Endothelial cell of umbilical vein (primary cell): ENCODE measurements at regions of chr16 and their contacts with region 1.

Region 1: GRCh38 chr16:49855280-49855821 is 561 bp downstream of the ZNF423 start:
- DNase-seq: peak; percentile 73
- H3K4me3 ChIP-seq: peak overlapping the region; percentile 48 to 92 (median 49)
- H3K27ac ChIP-seq: peak overlapping the region; percentile 19
- H3K4me1 ChIP-seq: peaks cover 31% of the 10 kb centered on the region
- H3K27me3 ChIP-seq: peaks cover 34 to 54% of the 10 kb centered on the region in 2 experiments
- CTCF ChIP-seq: no peak
- POLR2A ChIP-seq: peak; percentile 73

Region 2: GRCh38 chr16:49441366-49441780 is 414.0 kb before region 1 on chr16:
- CTCF ChIA-PET with region 1: no interaction called
- POLR2A ChIA-PET with region 1: no interaction called
- dilution Hi-C with region 1: no loop called
- intact Hi-C with region 1: loop called (anchors 5 kb)
- DNase-seq: no peak
- H3K4me3 ChIP-seq: no peak overlapping the region
- H3K27ac ChIP-seq: no peak overlapping the region
- H3K4me1 ChIP-seq: no peaks in the 10 kb centered on the region
- H3K27me3 ChIP-seq: no peaks in the 10 kb centered on the region
- CTCF ChIP-seq: no peak
- POLR2A ChIP-seq: no peak

Region 3: DNA sequence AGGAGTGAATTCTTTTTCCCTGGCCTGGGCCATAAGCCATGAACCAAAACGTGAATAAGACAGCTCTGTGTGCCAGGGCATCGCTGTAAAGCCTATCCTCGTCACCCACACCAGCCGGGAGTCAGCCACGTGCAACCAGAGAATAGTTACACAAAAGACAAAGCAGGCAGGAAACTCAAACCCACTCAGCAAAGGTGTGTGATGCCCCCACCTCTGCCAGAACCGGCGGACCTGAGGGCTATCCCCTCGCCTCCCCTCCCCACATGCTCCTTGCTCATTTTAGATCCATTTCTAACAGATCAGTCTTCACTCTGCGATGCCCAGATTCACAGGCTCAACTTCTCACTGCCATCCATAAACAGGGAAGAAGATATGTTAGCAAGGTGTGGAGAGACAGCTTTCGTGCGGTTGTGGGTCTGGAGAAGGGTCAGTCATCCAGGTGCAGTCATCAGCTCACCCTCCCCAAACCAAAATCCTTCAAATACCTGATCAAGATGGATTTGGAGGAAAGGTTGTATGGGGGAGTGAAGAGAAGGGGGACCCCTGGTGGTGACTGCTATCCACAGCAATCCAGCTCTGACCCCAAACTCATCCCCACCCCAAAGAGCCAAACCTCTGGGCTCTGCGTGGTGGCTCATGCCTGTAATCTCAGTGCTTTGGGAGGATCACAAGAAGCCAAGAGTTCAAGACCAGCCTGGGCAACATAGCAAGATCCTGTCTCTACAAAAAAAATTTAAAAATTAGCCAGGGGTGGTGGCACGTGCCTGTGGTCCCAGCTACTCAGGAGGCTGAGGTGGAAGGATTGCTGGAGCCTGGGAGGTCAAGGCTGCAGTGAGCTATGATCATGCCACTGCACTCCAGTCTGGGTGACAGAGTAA is 262.6 kb before region 1 on chr16:
- CTCF ChIA-PET with region 1: interaction called, 12 read pairs
- POLR2A ChIA-PET with region 1: no interaction called
- dilution Hi-C with region 1: no loop called
- intact Hi-C with region 1: loop called (anchors 2 kb)
- DNase-seq: peak; percentile 33
- H3K4me3 ChIP-seq: no peak overlapping the region
- H3K27ac ChIP-seq: no peak overlapping the region
- H3K4me1 ChIP-seq: peaks cover 4% of the 10 kb centered on the region
- H3K27me3 ChIP-seq: no peaks in the 10 kb centered on the region
- CTCF ChIP-seq: peak; percentile 64 to 88
- POLR2A ChIP-seq: no peak

Region 4: DNA sequence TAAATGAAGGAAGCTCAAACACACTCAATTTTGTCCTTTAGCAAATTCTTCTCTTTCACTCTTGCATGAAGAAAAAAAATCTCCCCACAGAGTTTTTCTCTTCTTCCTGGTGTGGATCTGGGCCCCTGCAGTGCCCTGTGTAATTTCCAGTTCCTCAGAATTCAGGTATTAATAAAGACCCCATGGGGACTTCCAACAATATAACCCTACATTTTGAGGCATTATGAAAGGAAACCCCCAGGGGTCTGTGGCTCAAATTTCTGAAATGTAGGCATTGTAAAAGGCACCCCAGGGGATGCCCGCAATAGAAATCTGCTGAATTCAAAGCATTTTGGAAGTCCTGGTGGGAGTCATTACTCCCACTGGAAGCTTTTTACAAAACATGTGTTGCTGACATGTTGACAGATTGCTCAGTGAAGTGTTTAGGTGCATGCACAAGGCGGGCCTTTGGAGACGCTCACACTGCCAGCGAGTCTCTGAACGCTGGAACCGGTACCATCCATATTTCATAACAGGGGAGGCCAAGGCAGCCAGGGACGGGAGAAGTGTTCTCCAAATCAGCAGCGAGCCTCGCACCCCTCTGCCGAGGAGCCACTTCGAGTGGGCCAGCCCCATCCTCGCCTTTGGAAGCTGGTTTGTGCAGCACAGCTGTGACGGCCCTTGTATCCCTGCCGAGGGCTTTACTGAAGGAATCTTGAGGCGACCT is 153.4 kb before region 1 on chr16:
- CTCF ChIA-PET with region 1: interaction called, 3 read pairs
- POLR2A ChIA-PET with region 1: no interaction called
- dilution Hi-C with region 1: no loop called
- intact Hi-C with region 1: loop called (anchors 5 kb)
- DNase-seq: no peak
- H3K4me3 ChIP-seq: no peak overlapping the region
- H3K27ac ChIP-seq: no peak overlapping the region
- H3K4me1 ChIP-seq: no peaks in the 10 kb centered on the region
- H3K27me3 ChIP-seq: peaks cover 11 to 15% of the 10 kb centered on the region in 2 experiments
- CTCF ChIP-seq: no peak
- POLR2A ChIP-seq: no peak

Region 5: GRCh38 chr16:49821156-49821555 is 34.2 kb before region 1 on chr16:
- CTCF ChIA-PET with region 1: interaction called, 20 read pairs
- POLR2A ChIA-PET with region 1: no interaction called
- dilution Hi-C with region 1: no loop called
- intact Hi-C with region 1: loop called (anchors 1 kb)
- DNase-seq: no peak
- H3K4me3 ChIP-seq: no peak overlapping the region
- H3K27ac ChIP-seq: no peak overlapping the region
- H3K4me1 ChIP-seq: peaks cover 23% of the 10 kb centered on the region
- H3K27me3 ChIP-seq: no peaks in the 10 kb centered on the region
- CTCF ChIP-seq: no peak
- POLR2A ChIP-seq: no peak

Region 6: DNA sequence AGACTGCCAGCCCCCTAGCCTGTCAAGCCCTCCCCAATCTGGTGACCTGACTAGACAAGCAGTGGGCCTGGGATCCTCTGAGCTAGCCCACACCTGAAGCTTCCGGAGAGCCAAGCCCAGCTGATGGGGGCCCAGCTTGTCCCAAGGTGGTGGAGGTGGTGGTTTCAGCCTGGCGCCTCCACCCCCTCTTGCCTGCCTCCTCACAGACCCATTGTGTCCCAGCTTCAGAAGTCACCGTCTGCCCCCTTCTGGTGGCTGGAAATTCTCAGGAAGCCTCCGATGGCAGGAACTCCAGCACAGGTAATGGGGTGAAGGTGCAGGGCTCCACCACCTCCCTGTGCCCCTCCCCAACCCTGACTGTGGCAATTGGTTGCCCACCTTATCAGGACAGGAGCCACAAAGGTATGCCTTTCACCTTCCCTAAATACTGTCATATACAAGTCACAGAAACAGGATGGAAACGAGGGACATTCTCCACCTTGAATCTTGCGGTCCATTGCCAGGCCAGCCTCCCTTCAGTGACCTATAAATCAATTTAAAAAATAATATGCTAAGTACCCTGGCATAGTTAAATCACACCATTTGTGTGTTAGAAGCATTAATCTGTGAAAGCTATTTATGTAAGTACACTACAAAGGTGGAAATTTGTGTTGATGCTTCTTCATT is 66.6 kb after region 1 on chr16:
- CTCF ChIA-PET with region 1: interaction called, 30 read pairs
- POLR2A ChIA-PET with region 1: no interaction called
- dilution Hi-C with region 1: no loop called
- intact Hi-C with region 1: loop called (anchors 5 kb)
- DNase-seq: peak; percentile 52
- H3K4me3 ChIP-seq: no peak overlapping the region
- H3K27ac ChIP-seq: no peak overlapping the region
- H3K4me1 ChIP-seq: no peaks in the 10 kb centered on the region
- H3K27me3 ChIP-seq: no peaks in the 10 kb centered on the region
- CTCF ChIP-seq: peak; percentile 46 to 72
- POLR2A ChIP-seq: no peak